K562 (cell line): ENCODE measurements at regions of chr10 and their contacts with region 1.

Region 1: DNA sequence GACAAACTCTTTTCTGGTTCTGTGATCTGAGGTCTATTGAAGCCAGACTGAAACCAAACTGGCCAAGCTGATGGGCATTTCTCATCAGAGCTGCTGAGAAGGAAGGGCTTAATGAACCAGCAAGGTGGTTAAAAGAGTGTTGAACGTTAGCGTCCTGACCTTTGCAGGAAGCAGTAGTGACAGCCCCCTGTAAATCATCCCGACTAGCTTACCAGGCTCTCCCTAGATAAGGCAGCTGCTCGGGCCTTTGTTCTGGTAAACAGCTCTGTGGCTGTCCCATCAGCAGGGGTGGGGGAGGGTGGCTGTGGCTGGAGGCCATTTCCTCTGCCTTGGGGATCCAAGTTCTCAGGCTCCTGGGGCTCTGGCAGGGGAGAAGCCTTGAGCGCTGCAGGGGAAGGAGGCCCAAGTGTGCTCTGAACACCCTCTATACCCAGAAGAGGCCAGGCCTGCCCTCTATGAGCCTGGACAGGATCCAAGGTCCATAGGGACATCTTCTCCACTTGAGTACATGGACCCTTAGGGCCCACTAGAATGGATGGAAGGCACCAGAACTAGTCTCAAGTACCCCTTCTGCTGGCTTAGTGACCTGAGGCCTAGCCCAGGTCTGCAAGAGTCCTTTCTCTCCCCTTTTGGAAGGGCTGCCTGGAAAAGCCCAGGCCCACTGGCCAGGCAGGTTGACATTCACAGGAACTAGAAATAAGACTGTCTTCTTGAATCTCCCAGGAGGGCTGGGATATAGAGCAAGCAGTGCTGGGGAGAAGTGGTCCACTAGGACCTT is 134.6 kb downstream of the ARHGAP22 start:
- DNase-seq: peak; percentile 70 to 99 (median 85)
- ATAC-seq: peak; percentile 88
- H3K4me3 ChIP-seq: no peak overlapping the region
- H3K27ac ChIP-seq: peak overlapping the region; percentile 100
- H3K4me1 ChIP-seq: peaks cover 69 to 71% of the 10 kb centered on the region in 2 experiments
- H3K27me3 ChIP-seq: no peaks in the 10 kb centered on the region; a peak in 1 of 5 replicates
- CTCF ChIP-seq: peak in 1 of 3 experiments; percentile 9; a peak in 1 of 6 replicates
- EP300 ChIP-seq: peak; percentile 100
- POLR2A ChIP-seq: peak; percentile 79
- RAD21 ChIP-seq: peak; percentile 45 to 63; a peak in 3 of 4 replicates

Region 2: GRCh38 chr10:48431871-48432270 is 38.4 kb before region 1 on chr10:
- CTCF ChIA-PET with region 1: no interaction called
- POLR2A ChIA-PET with region 1: no interaction called
- in situ Hi-C with region 1: no loop called
- intact Hi-C with region 1: loop called (anchors 5 kb)
- DNase-seq: peak in 2 of 4 experiments; percentile 72 to 85
- ATAC-seq: peak; percentile 93
- H3K4me3 ChIP-seq: no peak overlapping the region
- H3K27ac ChIP-seq: peak overlapping the region; percentile 45; the same call in 2 of the 3 replicates
- H3K4me1 ChIP-seq: peaks cover 0 to 25% of the 10 kb centered on the region in 2 experiments; a peak in 4 of 5 replicates
- H3K27me3 ChIP-seq: no peaks in the 10 kb centered on the region
- CTCF ChIP-seq: no peak
- EP300 ChIP-seq: peak; percentile 78; the same call in 1 of the 2 replicates
- POLR2A ChIP-seq: no peak
- RAD21 ChIP-seq: no peak

Region 3: GRCh38 chr10:48444266-48444665 is 26.0 kb before region 1 on chr10:
- CTCF ChIA-PET with region 1: no interaction called
- POLR2A ChIA-PET with region 1: interaction called, 3 read pairs
- in situ Hi-C with region 1: no loop called
- intact Hi-C with region 1: loop called (anchors 1 kb)
- DNase-seq: peak in 2 of 4 experiments; percentile 46 to 67
- ATAC-seq: peak; percentile 57
- H3K4me3 ChIP-seq: no peak overlapping the region
- H3K27ac ChIP-seq: no peak overlapping the region
- H3K4me1 ChIP-seq: peaks cover 0 to 16% of the 10 kb centered on the region in 2 experiments
- H3K27me3 ChIP-seq: no peaks in the 10 kb centered on the region
- CTCF ChIP-seq: peak; percentile 65 to 80 (median 67)
- EP300 ChIP-seq: no peak
- POLR2A ChIP-seq: no peak
- RAD21 ChIP-seq: peak; percentile 94 to 98

Region 4: DNA sequence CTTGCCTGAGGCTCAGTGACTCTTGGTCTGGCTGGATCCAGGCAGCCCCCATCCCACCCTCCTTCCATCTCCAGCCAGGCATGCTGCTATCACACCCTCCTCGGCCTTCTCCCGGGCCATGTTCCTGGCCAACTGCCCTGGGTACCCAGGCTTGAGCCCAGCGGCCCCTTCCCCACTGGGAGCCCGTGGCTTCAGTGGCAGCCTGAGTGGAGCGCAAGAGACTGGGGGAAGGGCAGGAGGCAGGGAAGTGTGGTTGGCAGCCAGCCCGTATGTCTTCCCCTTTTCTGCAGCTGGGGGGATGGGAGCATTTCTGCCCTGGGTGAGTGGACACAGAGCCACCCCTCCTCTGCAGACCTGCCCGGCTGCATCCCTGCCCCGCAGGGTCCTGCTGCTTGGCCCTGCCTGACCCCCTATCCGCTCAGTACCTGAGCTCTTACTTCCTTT is 13.9 kb before region 1 on chr10:
- CTCF ChIA-PET with region 1: interaction called, 3 read pairs
- POLR2A ChIA-PET with region 1: interaction called, 4 read pairs
- in situ Hi-C with region 1: no loop called
- intact Hi-C with region 1: loop called (anchors 2 kb)
- DNase-seq: peak; percentile 68 to 81 (median 74)
- ATAC-seq: peak; percentile 80
- H3K4me3 ChIP-seq: no peak overlapping the region
- H3K27ac ChIP-seq: peak overlapping the region; percentile 62; the same call in 2 of the 3 replicates
- H3K4me1 ChIP-seq: peaks cover 56 to 69% of the 10 kb centered on the region in 2 experiments
- H3K27me3 ChIP-seq: no peaks in the 10 kb centered on the region
- CTCF ChIP-seq: 0 out of 6 replicates have a peak, but pooled peaks of 1 of the 3 experiments have one; percentile 8
- EP300 ChIP-seq: peak; percentile 46
- POLR2A ChIP-seq: no peak
- RAD21 ChIP-seq: peak; percentile 17 to 37; a peak in 3 of 4 replicates

Region 5: DNA sequence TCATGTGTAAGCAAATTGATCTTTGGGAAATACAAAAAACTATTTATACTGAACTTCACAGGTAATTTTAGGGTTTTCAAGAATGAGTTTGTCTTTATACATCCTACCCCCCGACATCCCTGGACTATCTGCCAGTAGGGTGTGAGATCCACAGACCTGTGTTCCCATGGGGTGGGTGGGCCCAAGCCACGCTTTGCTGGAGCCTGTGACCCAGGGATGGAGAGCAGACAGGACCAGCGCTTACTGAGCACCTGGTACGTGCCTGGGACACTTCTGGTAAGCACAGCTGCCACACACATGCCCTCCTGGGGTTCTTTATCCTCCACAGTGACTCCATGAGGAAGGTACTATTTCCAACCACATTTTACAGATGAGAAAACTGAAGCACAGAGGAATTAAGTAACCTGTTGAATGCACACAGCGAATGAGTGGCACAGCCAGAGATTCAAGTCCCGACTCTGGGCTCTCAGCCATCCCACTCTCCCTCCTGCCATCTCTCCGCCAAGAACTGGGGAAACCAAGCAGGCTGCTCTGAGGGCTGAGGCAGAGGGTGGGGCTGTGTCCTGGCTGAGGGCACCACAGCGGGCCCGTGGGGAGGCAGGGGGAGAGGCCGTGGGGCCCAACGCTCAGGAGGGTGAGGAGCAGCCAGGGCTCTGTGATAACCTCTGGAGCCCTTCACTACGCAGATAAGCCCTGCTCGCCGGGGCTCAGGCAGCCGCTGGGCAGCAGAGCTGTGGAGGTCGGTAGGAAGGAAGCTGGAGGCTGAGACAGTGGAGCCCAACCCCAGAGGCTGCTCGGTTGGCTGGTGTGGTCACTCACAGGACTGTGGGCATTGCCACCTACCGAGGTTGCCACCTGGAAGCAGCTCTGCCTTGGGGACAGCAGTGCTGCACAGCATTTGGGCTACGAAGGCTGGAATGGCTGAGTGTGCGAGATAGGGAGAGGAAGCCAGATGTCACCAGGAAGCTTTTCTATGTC is 10.4 kb after region 1 on chr10:
- CTCF ChIA-PET with region 1: no interaction called
- POLR2A ChIA-PET with region 1: interaction called, 10 read pairs
- in situ Hi-C with region 1: no loop called
- intact Hi-C with region 1: loop called (anchors 1 kb)
- DNase-seq: peak; percentile 57 to 85 (median 68)
- ATAC-seq: peak; percentile 78
- H3K4me3 ChIP-seq: no peak overlapping the region
- H3K27ac ChIP-seq: peak overlapping the region; percentile 81
- H3K4me1 ChIP-seq: peaks cover 52 to 98% of the 10 kb centered on the region in 2 experiments
- H3K27me3 ChIP-seq: no peaks in the 10 kb centered on the region
- CTCF ChIP-seq: no peak
- EP300 ChIP-seq: peak; percentile 53; the same call in 1 of the 2 replicates
- POLR2A ChIP-seq: peak; percentile 44; the same call in 1 of the 2 replicates
- RAD21 ChIP-seq: no peak

Region 6: GRCh38 chr10:48604039-48604990 is 134.0 kb after region 1 on chr10:
- CTCF ChIA-PET with region 1: no interaction called
- POLR2A ChIA-PET with region 1: no interaction called
- in situ Hi-C with region 1: no loop called
- intact Hi-C with region 1: no loop called
- DNase-seq: no peak
- ATAC-seq: no peak
- H3K4me3 ChIP-seq: no peak overlapping the region
- H3K27ac ChIP-seq: no peak overlapping the region
- H3K4me1 ChIP-seq: peaks cover 0 to 9% of the 10 kb centered on the region in 2 experiments; a peak in 2 of 5 replicates
- H3K27me3 ChIP-seq: peaks cover 21 to 23% of the 10 kb centered on the region in 2 experiments
- CTCF ChIP-seq: no peak
- EP300 ChIP-seq: no peak
- POLR2A ChIP-seq: no peak
- RAD21 ChIP-seq: no peak